AG04449 (cell line): ENCODE measurements at regions of chr11 and their contacts with region 1.

Region 1: DNA sequence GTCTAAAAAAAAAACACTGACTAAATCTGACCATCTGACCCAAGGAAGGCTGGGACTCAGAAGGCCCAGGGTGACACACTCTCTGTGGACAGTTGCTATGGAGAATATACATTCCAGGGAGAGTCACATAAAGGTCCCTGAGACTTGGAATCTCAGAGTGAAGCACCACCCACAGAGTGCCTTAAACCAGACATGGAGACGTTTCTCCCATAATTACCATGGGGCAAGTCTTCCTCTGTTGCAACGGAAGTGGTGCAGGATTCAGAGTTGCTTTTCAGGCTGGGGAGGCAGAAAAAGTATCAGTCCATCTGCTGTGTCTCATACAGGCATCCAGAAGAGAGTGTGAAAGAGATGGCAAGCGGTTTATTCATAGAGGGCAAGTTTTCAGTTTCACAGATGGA is 58.7 kb upstream of the SLN start:
- DNase-seq: peak; percentile 17
- H3K4me3 ChIP-seq: no peak overlapping the region
- CTCF ChIP-seq: no peak

Region 2: GRCh38 chr11:107565219-107565937 is 205.2 kb before region 1 on chr11 and contains the start of gene ALKBH8:
- CTCF ChIA-PET with region 1: interaction called, 77 read pairs
- POLR2A ChIA-PET with region 1: no interaction called
- DNase-seq: no peak
- H3K4me3 ChIP-seq: peak within 1 kb of the TSS; percentile 72
- CTCF ChIP-seq: no peak

Region 3: DNA sequence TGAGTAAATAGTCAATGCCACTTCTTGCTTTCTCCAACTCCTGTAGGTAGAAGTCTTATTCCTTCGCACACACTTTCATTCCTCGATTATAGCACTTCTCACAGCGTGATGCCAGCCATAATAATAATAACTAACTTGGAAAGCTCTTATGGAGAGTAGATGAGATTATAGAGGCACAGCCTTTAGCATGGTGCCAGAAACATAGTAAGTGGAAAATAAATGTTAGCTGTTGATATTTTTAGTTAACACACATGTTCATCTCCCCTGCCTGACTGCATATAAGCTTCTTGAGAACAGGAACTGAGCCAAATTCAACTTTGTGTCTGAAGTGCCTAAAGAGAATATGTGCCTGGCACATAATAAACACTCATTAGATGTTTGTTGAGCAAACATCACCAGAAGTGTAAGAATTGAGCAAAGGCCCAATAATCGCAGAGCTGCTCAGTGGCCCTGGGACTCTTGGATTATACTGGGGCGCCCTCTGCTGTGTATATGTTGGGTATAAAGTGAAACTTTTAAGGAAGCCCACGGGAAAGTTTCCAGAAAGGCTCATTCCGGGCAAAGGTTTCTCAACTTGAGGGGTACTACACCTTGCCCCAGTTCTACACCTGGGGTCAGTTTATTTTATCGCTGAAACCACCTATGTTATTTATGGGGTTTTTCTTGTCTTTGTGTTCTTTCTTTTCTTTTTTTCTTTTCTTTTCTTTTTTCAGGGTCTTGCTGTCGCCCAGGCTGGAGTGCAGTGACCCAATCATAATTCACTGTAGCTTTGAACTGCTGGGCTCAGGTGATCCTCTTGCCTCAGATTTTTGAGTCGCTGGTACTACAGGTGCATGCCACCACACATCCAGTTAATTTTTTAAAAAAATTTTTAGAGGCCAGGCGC is 81.0 kb before region 1 on chr11:
- CTCF ChIA-PET with region 1: interaction called, 21 read pairs
- POLR2A ChIA-PET with region 1: no interaction called
- DNase-seq: no peak
- H3K4me3 ChIP-seq: no peak overlapping the region
- CTCF ChIP-seq: peak; percentile 61

Region 4: DNA sequence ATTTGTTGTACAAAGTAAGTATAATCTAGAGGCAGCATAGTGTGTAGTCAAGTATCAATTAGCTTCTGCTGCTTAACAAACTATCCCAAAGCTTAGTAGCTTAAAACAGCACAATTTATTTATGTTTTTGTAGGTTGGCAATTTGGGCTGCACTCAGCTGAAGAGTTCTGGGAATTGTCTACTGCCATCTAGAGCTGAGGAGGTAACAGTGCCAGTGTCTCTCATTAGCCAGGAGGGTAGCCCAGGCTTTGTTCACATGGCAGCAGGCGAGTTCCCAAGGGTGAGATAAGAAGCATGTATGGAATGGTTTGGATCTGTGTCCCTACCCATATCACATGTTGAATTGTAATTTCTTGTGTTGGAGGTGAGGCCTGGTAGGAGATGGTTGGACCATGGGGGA is 12.9 kb before region 1 on chr11:
- CTCF ChIA-PET with region 1: interaction called, 14 read pairs
- POLR2A ChIA-PET with region 1: no interaction called
- DNase-seq: no peak
- H3K4me3 ChIP-seq: no peak overlapping the region
- CTCF ChIP-seq: no peak

Region 5: DNA sequence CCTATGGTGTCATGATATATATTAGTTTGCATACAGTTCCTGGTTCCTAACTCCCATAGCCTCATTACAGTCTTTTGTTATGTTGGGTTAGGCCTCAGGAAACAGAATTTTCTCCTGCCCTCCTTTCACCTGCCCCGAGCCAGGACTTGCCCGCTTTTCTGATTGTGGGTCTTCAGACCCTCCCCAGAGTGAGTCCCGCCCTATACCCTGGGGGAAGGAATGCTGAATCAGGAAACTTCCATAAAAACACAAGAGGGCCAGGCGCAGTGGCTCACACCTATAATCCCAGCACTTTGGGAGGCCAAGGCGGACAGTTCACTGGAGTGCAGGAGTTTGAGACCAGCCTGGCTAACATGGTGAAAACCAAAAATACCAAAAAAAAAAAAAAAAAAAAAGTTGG is 17.2 kb after region 1 on chr11:
- CTCF ChIA-PET with region 1: interaction called, 20 read pairs
- POLR2A ChIA-PET with region 1: no interaction called
- DNase-seq: no peak
- H3K4me3 ChIP-seq: no peak overlapping the region
- CTCF ChIP-seq: no peak

Region 6: GRCh38 chr11:107924306-107924705 is 153.8 kb after region 1 on chr11:
- CTCF ChIA-PET with region 1: no interaction called
- POLR2A ChIA-PET with region 1: no interaction called
- DNase-seq: no peak
- H3K4me3 ChIP-seq: no peak overlapping the region
- CTCF ChIP-seq: no peak

Region 7: DNA sequence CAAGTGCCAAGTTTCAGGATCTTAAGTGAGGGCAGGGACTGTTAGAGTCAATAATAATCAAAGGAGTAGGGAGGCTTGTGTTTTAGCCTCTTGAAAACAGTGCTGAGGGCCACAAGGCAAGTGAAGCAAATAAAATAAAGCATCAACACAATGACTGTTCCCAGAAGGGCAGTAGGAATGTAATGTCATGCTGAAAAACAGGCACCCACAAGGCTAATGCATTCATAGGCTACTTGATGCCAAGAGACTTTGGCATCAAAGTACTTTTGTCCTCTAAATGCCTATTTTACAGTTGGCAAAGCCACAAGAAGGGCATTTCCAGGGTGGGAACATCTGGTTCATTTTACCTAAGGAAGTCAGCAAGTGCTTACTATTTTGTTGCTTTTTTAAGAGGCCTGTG is 180.6 kb after region 1 on chr11:
- CTCF ChIA-PET with region 1: no interaction called
- POLR2A ChIA-PET with region 1: no interaction called
- DNase-seq: no peak
- H3K4me3 ChIP-seq: no peak overlapping the region
- CTCF ChIP-seq: no peak

Region 8: DNA sequence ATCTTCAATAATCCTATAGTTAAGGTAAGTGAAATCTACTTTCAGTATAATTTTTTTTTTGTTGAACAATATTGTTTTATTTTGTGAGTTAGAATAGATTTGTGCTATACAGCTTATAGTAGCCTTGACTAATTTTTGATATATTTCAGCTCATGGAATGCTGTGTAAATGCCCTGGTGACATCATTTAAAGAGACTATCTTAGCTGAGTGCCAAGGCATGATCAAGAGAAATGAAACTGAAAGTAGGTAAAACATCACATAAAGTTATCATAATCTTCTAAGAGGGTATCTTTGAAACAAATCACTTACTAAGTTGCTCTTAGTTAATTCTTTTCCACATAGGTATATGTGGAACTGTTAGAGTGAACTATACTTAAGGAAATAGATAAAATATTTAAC is 299.4 kb after region 1 on chr11:
- CTCF ChIA-PET with region 1: no interaction called
- POLR2A ChIA-PET with region 1: no interaction called
- DNase-seq: peak; percentile 49
- H3K4me3 ChIP-seq: no peak overlapping the region
- CTCF ChIP-seq: no peak